ENCODE measurements at regions of chr6 and their contacts with region 1.

Region 1: DNA sequence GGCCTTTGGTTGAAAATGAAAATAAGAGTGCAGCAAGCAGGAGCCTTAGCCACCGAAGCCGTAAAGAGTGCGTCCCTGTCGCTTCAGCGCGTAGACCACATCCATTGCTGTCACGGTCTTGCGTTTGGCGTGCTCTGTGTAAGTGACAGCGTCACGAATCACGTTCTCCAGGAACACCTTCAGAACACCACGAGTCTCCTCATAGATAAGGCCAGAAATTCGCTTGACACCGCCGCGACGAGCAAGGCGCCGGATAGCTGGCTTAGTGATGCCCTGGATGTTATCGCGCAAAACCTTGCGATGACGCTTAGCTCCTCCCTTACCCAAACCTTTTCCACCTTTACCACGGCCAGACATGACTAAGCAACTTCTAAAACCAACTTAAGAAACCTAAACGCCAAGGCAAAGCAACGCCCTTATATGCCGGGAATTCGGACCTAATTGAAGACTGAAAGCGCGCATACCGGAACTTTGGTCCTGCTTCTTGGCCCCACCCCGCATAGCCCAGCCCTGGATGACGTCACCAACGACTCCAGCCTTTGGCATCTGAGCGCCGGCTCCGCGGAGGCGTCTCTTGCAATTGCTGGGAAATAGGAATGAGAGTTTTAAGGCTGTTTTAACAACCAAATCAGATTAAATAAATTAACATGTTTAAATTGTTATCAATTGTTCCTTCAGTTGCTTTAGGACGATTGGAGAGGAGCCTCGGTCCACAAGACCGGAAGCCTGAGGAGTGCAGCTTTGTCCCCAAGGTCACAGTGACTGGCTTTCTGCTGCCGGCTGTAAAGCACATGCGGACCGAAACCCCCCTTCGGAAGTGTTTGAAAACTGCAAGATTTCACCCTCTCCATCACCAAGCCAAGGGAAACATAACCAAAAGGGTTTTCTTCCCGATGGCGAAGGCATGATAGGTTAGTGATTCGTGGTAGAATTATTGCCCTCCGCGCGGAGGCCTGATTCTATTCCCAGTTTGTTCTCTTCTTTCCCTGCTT is 79.6 kb upstream of the BTN3A2 start:
- H3K4me3 ChIP-seq: peak overlapping the region; percentile 67
- H3K27ac ChIP-seq: peak overlapping the region; percentile 65
- H3K4me1 ChIP-seq: no peaks in the 10 kb centered on the region
- CTCF ChIP-seq: no peak

Region 2: GRCh38 chr6:26204332-26205165 is 80.9 kb before region 1 on chr6:
- CTCF ChIA-PET with region 1: interaction called, 4 read pairs
- POLR2A ChIA-PET with region 1: interaction called, 26 read pairs
- H3K4me3 ChIP-seq: peak overlapping the region; percentile 73
- H3K27ac ChIP-seq: peak overlapping the region; percentile 71
- H3K4me1 ChIP-seq: no peaks in the 10 kb centered on the region
- CTCF ChIP-seq: peak; percentile 81

Region 3: DNA sequence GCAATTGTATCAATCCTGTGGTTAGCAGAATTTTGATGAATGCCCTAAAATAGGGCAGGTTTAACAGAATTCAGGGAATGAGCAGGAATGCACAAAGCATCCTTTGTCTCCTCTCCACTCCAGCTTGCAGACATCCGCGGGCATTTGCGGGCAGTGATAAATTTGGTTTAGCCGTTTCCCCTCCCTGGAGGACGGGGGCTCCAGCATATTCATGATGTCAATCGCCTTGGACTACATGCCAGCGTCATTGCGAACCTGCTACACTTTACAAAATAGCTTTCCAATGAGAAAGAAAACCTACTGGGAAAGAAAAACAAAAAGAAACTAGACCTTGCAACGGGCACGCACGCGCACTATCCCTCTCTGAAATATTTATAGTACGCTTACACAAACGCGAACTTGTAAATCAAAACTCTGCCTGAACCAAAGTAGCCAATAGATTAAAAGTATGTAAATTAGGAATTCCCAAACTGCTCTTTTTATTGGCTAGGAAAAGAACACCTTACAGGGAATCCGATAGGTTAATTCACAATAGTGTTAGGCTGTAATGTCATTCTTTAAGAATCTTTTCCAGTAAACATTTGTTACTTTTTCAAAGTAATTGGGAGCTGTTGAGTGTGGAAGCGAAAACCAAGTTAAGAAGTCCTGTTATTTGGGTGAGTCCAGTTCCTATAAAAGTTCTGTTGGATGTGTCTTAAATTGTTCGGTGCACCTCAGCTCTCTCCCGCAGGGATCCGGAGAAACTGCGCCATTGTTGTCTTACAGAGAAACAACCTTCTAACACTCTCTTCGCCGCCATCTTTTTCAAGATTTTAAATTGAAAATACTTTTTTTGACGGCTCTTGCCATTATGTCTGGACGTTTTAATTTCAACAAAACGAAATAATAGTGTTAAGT is 61.5 kb before region 1 on chr6:
- CTCF ChIA-PET with region 1: no interaction called
- POLR2A ChIA-PET with region 1: interaction called, 23 read pairs
- H3K4me3 ChIP-seq: peak overlapping the region; percentile 68
- H3K27ac ChIP-seq: peak overlapping the region; percentile 61
- H3K4me1 ChIP-seq: no peaks in the 10 kb centered on the region
- CTCF ChIP-seq: no peak

Region 4: GRCh38 chr6:26272171-26272637 is 13.2 kb before region 1 on chr6:
- CTCF ChIA-PET with region 1: interaction called, 3 read pairs
- POLR2A ChIA-PET with region 1: interaction called, 13 read pairs
- H3K4me3 ChIP-seq: no peak overlapping the region
- H3K27ac ChIP-seq: no peak overlapping the region
- H3K4me1 ChIP-seq: peaks cover 3% of the 10 kb centered on the region; the same call in 1 of the 2 replicates
- CTCF ChIP-seq: no peak

Region 5: GRCh38 chr6:26351544-26351953 is 66.1 kb after region 1 on chr6:
- CTCF ChIA-PET with region 1: no interaction called
- POLR2A ChIA-PET with region 1: interaction called, 11 read pairs
- H3K4me3 ChIP-seq: no peak overlapping the region
- H3K27ac ChIP-seq: no peak overlapping the region
- H3K4me1 ChIP-seq: 0 out of 2 replicates have a peak, but pooled peaks cover 2% of the 10 kb centered on the region
- CTCF ChIP-seq: no peak